ENCODE measurements at regions of chr7 and their contacts with region 1.

Region 1: DNA sequence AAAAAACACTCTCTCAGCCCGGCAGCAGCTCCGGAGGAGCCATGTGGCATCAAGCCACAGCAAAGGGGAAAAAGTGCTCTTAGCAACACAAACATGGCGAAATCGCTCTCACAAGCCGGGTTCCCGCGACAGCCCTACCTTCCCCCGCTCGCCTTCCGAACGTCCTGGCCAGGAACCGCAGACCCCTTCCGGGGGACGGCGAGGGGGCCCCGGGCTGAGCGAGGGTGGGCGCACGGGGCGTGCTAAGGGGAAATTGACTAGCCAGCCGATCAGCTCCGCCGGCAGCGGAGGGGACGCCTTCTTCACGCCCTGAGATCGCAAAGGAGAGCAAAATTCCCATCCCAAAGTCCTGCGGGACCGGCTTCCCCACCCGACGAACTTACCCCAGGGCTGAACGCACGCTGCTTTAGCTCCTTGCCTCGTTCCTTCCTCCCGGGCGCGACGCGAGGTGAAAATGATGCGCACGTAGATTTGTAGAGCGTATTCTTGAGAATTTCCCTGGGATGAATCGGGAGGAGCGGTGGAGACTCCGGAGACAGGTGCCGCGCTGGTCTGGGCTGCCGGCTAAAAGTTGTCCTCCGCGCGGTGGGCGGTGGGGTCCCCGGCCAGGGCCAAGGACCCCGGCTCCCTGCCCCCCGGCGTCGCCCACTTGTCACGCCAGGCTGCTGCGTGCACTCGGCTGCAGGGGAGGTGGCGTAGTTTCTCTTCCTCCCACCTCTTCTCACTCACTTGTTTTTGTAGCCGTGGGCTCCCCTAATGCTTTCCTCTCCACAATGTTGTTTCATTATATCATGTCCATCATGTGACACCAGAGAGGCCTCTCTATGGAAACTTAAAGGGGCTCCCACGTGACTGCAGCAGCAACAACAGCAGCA is 220.1 kb upstream of the MKLN1 start:
- DNase-seq: peak; percentile 58 to 85
- H3K4me3 ChIP-seq: peak overlapping the region; percentile 73
- H3K27ac ChIP-seq: peak overlapping the region; percentile 90
- H3K4me1 ChIP-seq: peaks cover 36% of the 10 kb centered on the region
- H3K27me3 ChIP-seq: no peaks in the 10 kb centered on the region
- CTCF ChIP-seq: no peak

Region 2: GRCh38 chr7:130875265-130875741 is 232.3 kb before region 1 on chr7:
- CTCF ChIA-PET with region 1: no interaction called
- POLR2A ChIA-PET with region 1: no interaction called
- intact Hi-C with region 1: no loop called
- DNase-seq: peak in 1 of 2 experiments; percentile 72
- H3K4me3 ChIP-seq: no peak overlapping the region
- H3K27ac ChIP-seq: no peak overlapping the region
- H3K4me1 ChIP-seq: no peaks in the 10 kb centered on the region
- H3K27me3 ChIP-seq: no peaks in the 10 kb centered on the region
- CTCF ChIP-seq: peak; percentile 84

Region 3: GRCh38 chr7:130961128-130961601 is 146.4 kb before region 1 on chr7:
- CTCF ChIA-PET with region 1: no interaction called
- POLR2A ChIA-PET with region 1: no interaction called
- intact Hi-C with region 1: loop called (anchors 5 kb)
- DNase-seq: peak in 1 of 2 experiments; percentile 47
- H3K4me3 ChIP-seq: peak overlapping the region; percentile 30; the same call in 1 of the 2 replicates
- H3K27ac ChIP-seq: peak overlapping the region; percentile 97
- H3K4me1 ChIP-seq: peaks cover 38% of the 10 kb centered on the region
- H3K27me3 ChIP-seq: no peaks in the 10 kb centered on the region
- CTCF ChIP-seq: no peak

Region 4: GRCh38 chr7:131164025-131164899 is 56.7 kb after region 1 on chr7:
- CTCF ChIA-PET with region 1: interaction called, 6 read pairs
- POLR2A ChIA-PET with region 1: interaction called, 50 read pairs
- intact Hi-C with region 1: loop called (anchors 1 kb)
- DNase-seq: peak; percentile 38 to 97
- H3K4me3 ChIP-seq: peak overlapping the region; percentile 32; the same call in 1 of the 2 replicates
- H3K27ac ChIP-seq: peak overlapping the region; percentile 95
- H3K4me1 ChIP-seq: peaks cover 44% of the 10 kb centered on the region
- H3K27me3 ChIP-seq: no peaks in the 10 kb centered on the region
- CTCF ChIP-seq: 0 out of 2 replicates have a peak, but pooled peaks have one; percentile 14

Region 5: DNA sequence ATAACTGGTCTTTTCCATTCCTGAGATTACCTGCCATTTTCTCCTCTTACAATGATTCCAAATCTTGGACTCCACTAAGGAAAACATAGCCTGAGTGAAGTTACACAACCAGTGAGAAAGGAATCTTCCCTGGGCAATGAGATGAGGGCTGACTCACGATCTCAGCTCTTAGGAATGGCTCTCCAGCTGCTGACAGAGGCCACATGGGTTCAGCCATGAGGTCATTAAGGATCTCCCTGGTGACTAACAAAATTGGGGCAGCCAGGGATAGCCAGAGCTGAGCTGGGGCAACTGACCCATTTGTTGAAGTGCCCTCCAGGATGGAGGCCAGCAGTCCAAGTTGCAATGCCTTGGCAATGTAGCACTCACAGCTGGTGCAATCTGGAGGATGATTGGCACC is 141.4 kb after region 1 on chr7:
- CTCF ChIA-PET with region 1: no interaction called
- POLR2A ChIA-PET with region 1: interaction called, 14 read pairs
- intact Hi-C with region 1: no loop called
- DNase-seq: peak; percentile 64 to 91
- H3K4me3 ChIP-seq: no peak overlapping the region
- H3K27ac ChIP-seq: 0 out of 2 replicates have a peak overlapping the region, but pooled peaks have one; percentile 8
- H3K4me1 ChIP-seq: peaks cover 15% of the 10 kb centered on the region
- H3K27me3 ChIP-seq: no peaks in the 10 kb centered on the region
- CTCF ChIP-seq: no peak

Region 6: DNA sequence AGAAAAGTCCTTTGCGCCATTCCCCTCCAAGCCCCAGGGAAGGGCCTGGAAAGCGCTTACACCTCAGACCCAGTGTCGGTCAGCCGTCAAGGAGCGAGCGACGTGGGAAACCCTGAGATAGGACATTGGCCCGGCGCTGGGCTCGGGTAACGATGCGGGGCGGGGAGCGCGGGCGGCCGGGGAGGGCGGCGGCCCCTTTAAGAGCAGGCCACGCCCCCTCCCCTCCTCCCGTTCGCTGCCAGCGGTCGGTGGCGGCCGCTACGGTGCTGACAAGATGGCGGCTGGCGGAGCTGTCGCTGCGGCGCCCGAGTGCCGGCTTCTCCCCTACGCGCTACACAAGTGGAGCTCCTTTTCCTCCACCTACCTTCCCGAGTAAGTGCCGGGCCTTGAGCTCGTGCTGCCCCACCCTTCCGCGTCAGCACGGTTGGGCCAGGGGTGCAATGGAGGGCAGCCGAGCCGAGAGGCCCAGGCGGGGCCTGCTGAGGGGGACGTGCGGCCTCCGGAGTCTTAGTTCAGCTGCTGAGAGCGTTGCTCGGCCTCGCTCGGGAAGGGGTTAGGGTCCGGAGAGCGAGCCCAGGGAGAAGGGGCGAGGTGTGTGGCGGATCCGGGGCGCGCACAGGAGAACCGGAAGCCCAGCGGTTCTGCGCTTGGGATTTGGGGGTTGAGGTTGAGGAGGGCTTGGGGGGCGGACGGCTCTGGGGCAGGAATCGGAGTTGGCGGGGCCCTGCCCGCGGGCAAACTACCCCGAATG is 220.2 kb after region 1 on chr7 and contains the start of gene MKLN1:
- CTCF ChIA-PET with region 1: no interaction called
- POLR2A ChIA-PET with region 1: interaction called, 4 read pairs
- intact Hi-C with region 1: loop called (anchors 1 kb)
- DNase-seq: peak; percentile 75 to 91
- H3K4me3 ChIP-seq: peak within 1 kb of the TSS; percentile 91
- H3K27ac ChIP-seq: peak within 1 kb of the TSS; percentile 76
- H3K4me1 ChIP-seq: peaks cover 48% of the 10 kb centered on the region
- H3K27me3 ChIP-seq: no peaks in the 10 kb centered on the region
- CTCF ChIP-seq: no peak
- total RNA-seq, gene MKLN1: 60.1 and 61.1 TPM in 2 replicates

Region 7: GRCh38 chr7:131381069-131381838 is 273.7 kb after region 1 on chr7:
- CTCF ChIA-PET with region 1: no interaction called
- POLR2A ChIA-PET with region 1: interaction called, 11 read pairs
- intact Hi-C with region 1: no loop called
- DNase-seq: no peak
- H3K4me3 ChIP-seq: no peak overlapping the region
- H3K27ac ChIP-seq: no peak overlapping the region
- H3K4me1 ChIP-seq: no peaks in the 10 kb centered on the region
- H3K27me3 ChIP-seq: no peaks in the 10 kb centered on the region
- CTCF ChIP-seq: no peak

Region 8: GRCh38 chr7:131735101-131735500 is 627.5 kb after region 1 on chr7:
- CTCF ChIA-PET with region 1: no interaction called
- POLR2A ChIA-PET with region 1: no interaction called
- intact Hi-C with region 1: no loop called
- DNase-seq: no peak
- H3K4me3 ChIP-seq: no peak overlapping the region
- H3K27ac ChIP-seq: no peak overlapping the region
- H3K4me1 ChIP-seq: no peaks in the 10 kb centered on the region
- H3K27me3 ChIP-seq: peaks cover 82% of the 10 kb centered on the region
- CTCF ChIP-seq: no peak

Measured in PC-9 (cell line).